PC-9 (cell line): ENCODE measurements at regions of chr3 and their contacts with region 1.

Region 1: DNA sequence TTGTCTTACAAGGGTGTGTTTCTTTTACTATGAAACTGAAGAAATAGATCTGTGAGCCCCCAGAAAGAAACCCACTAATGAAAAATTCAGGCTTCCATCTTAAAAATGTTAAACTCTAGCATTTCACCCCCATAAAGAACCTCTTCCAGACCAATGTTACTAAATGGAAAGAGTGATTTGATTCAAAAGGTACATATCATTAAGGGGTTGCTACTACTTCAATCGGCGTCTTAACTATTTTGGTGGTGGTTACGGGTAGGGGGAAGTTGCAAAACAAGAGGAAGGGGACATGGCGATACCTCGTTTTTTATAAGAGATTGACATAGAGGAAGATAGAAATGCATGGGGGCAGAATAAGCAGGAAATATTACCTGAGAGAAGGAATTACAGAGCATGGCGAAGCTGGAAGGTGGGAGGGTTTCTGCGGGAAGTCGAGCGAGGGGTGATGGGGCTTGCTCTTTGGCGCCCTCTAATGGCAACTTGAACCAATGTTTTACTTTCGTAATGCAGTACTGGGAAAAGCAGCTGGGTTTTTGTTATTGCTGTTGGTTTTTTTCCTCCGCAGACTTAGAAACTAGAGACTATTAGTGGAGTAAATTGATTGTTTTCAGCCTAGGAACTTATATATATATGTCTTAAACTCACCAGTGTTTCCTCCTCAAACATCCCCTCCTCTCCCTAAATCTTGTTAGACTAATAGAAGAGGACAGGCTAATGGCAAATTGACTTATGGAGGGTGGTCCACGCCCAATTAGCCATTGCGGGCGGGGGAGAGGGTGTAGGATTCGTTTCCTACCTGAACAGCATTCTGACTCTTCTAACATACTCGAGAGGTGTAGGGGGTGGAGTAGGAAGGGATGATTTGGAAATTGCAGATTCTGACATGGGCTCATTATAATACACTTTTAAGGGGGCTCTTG is 11.3 kb upstream of the SOX2 start:
- DNase-seq: peak; percentile 50 to 75
- H3K4me3 ChIP-seq: peak overlapping the region; percentile 29; the same call in 1 of the 2 replicates
- H3K27ac ChIP-seq: no peak overlapping the region
- H3K4me1 ChIP-seq: peaks cover 5% of the 10 kb centered on the region; the same call in 1 of the 2 replicates
- H3K27me3 ChIP-seq: peaks cover 29% of the 10 kb centered on the region; the same call in 1 of the 2 replicates
- CTCF ChIP-seq: peak; percentile 96

Region 2: GRCh38 chr3:180802837-180803236 is 897.6 kb before region 1 on chr3:
- CTCF ChIA-PET with region 1: no interaction called
- POLR2A ChIA-PET with region 1: no interaction called
- intact Hi-C with region 1: loop called (anchors 5 kb)
- DNase-seq: no peak
- H3K4me3 ChIP-seq: no peak overlapping the region
- H3K27ac ChIP-seq: no peak overlapping the region
- H3K4me1 ChIP-seq: no peaks in the 10 kb centered on the region
- H3K27me3 ChIP-seq: no peaks in the 10 kb centered on the region
- CTCF ChIP-seq: peak; percentile 70

Region 3: GRCh38 chr3:181278468-181279238 is 421.8 kb before region 1 on chr3:
- CTCF ChIA-PET with region 1: no interaction called
- POLR2A ChIA-PET with region 1: no interaction called
- intact Hi-C with region 1: loop called (anchors 5 kb)
- DNase-seq: no peak
- H3K4me3 ChIP-seq: no peak overlapping the region
- H3K27ac ChIP-seq: no peak overlapping the region
- H3K4me1 ChIP-seq: no peaks in the 10 kb centered on the region
- H3K27me3 ChIP-seq: no peaks in the 10 kb centered on the region
- CTCF ChIP-seq: peak; percentile 52

Region 4: GRCh38 chr3:181683563-181683962 is 16.9 kb before region 1 on chr3:
- CTCF ChIA-PET with region 1: no interaction called
- POLR2A ChIA-PET with region 1: no interaction called
- intact Hi-C with region 1: no loop called
- DNase-seq: no peak
- H3K4me3 ChIP-seq: no peak overlapping the region
- H3K27ac ChIP-seq: no peak overlapping the region
- H3K4me1 ChIP-seq: no peaks in the 10 kb centered on the region
- H3K27me3 ChIP-seq: no peaks in the 10 kb centered on the region
- CTCF ChIP-seq: no peak

Region 5: GRCh38 chr3:181739628-181740027 is 39.2 kb after region 1 on chr3:
- CTCF ChIA-PET with region 1: interaction called, 11 read pairs
- POLR2A ChIA-PET with region 1: no interaction called
- intact Hi-C with region 1: no loop called
- DNase-seq: peak; percentile 48 to 77
- H3K4me3 ChIP-seq: no peak overlapping the region
- H3K27ac ChIP-seq: peak overlapping the region; percentile 10
- H3K4me1 ChIP-seq: peaks cover 14% of the 10 kb centered on the region
- H3K27me3 ChIP-seq: no peaks in the 10 kb centered on the region
- CTCF ChIP-seq: no peak

Region 6: DNA sequence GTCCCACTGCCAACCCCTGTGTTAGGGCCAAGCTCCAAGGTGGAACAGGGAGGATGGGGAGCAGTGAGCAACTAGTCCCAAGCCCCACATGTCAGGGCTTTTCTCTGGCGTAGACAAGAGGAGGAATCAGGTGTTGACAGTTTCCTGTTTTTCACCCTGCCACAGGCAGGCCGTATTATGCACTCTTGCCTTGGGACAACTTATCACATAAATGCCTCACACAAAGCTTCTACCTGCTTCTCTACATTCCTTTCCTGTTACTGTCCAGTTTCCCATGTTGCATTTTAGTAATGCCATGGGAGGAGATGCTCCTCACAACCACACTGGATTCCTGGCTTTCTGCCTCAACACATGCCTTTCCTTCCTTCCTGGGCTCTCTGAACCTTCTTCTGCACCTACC is 711.6 kb after region 1 on chr3:
- CTCF ChIA-PET with region 1: interaction called, 12 read pairs
- POLR2A ChIA-PET with region 1: no interaction called
- intact Hi-C with region 1: no loop called
- DNase-seq: peak; percentile 67 to 95
- H3K4me3 ChIP-seq: no peak overlapping the region
- H3K27ac ChIP-seq: peak overlapping the region; percentile 50
- H3K4me1 ChIP-seq: peaks cover 15% of the 10 kb centered on the region
- H3K27me3 ChIP-seq: no peaks in the 10 kb centered on the region
- CTCF ChIP-seq: no peak